Right lobe of liver (tissue), 6 donors: ENCODE measurements at regions of chr16 and their contacts with region 1.

Region 1: GRCh38 chr16:74862741-74863244 is 88.2 kb upstream of the FA2H start:
- DNase-seq: no peak
- ATAC-seq: peak; percentile 75 to 88 (median 82)
- H3K4me3 ChIP-seq: no peak overlapping the region
- H3K27ac ChIP-seq: no peak overlapping the region
- H3K4me1 ChIP-seq: no peaks in the 10 kb centered on the region
- H3K27me3 ChIP-seq: no peaks in the 10 kb centered on the region
- CTCF ChIP-seq: peak; percentile 78 to 89 (median 81)
- POLR2A ChIP-seq: no peak

Region 2: DNA sequence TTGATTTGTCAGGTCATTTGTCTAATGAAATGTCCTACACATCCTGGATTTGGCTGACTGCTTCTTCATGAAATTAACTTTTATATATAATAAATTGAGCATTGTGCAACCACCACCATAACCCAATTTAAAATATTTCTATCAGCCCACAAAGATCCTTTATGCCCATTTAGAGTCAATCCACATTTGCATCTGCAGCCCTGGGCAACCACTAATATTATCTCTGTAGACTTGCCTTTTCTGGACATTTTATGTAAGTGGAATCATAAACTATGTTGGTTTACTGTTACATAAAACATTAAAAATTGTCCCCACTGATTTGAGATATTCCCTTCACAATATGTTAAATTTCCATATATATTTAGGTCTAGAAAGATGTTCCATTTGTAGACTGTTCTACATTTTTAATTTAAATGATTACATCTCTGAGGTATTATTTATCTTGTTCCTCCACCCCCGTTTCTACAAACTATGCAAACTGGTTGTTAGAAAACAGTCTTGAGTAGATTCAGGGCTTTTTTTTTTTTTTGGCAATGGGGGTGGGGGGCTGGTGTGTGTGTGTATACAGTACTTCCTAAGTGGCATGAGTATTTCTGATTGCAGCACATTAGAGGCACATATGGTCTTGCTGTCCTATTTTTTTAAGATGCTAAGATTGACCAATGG is 212.8 kb before region 1 on chr16:
- intact Hi-C with region 1: no loop called
- DNase-seq: no peak
- ATAC-seq: no peak
- H3K4me3 ChIP-seq: no peak overlapping the region
- H3K27ac ChIP-seq: no peak overlapping the region
- H3K4me1 ChIP-seq: peaks cover 0 to 13% (median 0%) of the 10 kb centered on the region in 4 donors
- H3K27me3 ChIP-seq: no peaks in the 10 kb centered on the region
- CTCF ChIP-seq: no peak
- POLR2A ChIP-seq: no peak

Region 3: DNA sequence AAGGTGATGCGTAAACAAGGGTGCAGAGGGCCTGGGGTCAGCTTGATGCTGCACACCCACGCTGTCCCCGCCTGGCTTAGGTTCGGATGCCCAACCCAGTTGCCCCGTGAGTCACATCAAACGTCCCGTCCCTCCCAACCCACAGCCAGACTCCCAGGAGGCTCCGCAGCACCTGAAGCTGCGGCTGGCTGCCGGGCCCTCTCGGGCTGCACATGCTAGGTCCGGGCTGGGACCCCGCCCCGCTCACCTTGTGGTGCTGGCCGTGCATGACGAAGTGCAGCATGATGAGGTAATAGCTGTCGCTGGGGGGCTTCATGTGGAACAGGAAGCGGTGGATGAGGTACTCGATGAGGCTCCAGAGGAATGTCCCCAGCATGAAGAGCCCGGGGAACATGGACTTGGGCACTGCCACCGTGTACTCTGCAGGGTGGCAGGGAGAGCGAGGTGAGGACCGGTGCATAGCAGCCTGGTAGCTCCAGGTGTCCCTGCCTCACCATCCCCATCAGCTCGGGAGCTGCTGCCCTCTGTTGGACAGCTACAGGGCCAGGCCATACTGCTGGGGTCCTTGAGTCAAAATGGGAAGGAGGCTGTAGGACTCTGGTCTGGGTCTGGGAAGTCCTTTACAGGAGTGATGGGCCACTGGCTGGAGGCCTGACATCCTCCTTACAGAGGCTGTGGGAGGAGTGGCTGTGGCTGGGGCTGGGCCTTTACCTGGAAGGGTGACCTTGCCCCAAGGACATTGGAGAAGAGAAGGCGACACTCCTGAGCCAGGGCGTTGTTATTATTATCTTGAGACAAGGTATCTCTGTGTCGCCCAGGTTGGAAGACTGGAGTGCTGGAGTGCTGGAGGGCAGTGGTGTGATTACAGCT is 143.8 kb before region 1 on chr16:
- intact Hi-C with region 1: loop called in 1 of 2 experiments (anchors 10 kb)
- DNase-seq: peak in 1 of 3 donors; percentile 37
- ATAC-seq: no peak
- H3K4me3 ChIP-seq: no peak overlapping the region
- H3K27ac ChIP-seq: no peak overlapping the region
- H3K4me1 ChIP-seq: no peaks in the 10 kb centered on the region
- H3K27me3 ChIP-seq: no peaks in the 10 kb centered on the region
- CTCF ChIP-seq: no peak
- POLR2A ChIP-seq: no peak

Region 4: DNA sequence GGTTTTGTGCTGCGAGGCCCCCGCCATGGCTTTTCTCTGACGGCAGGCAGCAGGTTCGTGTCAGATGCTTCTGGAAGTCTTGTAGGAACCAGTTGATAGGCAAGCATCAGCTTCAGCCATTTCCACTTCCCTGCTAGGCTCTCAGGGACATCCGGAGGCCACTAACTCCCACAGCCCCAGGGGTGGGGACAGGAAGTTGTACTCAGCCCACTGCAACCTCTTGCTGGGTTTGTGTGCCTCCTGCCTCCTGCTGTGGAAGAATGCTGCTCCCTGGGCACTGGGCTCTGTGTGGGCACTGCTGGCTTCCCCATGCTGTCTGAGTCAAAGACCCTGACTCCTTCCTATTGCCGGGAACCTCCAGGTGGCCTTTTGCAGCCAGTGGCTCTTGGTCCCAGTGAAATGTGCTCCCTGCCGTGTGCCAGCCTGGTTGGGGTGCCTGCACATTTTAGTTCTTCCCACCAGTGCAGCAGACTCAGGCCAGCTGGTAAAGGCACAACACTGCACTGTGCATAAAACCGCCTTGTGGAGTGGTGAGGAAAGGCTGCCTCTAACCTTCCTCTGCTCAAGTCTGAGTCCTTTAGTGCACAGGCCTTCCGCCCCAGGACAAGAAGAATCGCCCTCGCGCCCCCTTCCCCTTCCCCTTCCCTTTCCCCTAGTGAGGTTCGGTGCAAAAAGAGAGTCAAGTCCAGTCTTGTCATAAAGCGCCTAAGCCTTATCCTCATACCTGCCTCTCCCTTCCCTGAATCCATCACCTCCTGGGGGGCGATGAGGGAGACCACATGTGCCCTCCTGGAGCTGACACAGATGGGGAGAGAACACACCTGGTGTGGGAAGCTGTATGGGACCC is 237.2 kb after region 1 on chr16:
- intact Hi-C with region 1: no loop called
- DNase-seq: peak in 1 of 3 donors; percentile 34
- ATAC-seq: peak; percentile 59 to 78 (median 75)
- H3K4me3 ChIP-seq: no peak overlapping the region
- H3K27ac ChIP-seq: no peak overlapping the region
- H3K4me1 ChIP-seq: no peaks in the 10 kb centered on the region
- H3K27me3 ChIP-seq: no peaks in the 10 kb centered on the region
- CTCF ChIP-seq: no peak
- POLR2A ChIP-seq: no peak